Right cardiac atrium (tissue), 5 donors: ENCODE measurements at regions of chr2 and their contacts with region 1.

Region 1: GRCh38 chr2:98731041-98731893 is at the start of gene MGAT4A:
- DNase-seq: peak; percentile 84 to 94 (median 93)
- ATAC-seq: peak; percentile 96
- H3K4me3 ChIP-seq: peak within 1 kb of the TSS; percentile 99
- H3K27ac ChIP-seq: peak within 1 kb of the TSS; percentile 87
- H3K4me1 ChIP-seq: peaks cover 5% of the 10 kb centered on the region
- H3K27me3 ChIP-seq: no peaks in the 10 kb centered on the region
- total RNA-seq, gene MGAT4A: 23.5 to 37.2 (median 26.1) TPM

Region 2: GRCh38 chr2:98654699-98655495 is 76.4 kb before region 1 on chr2:
- intact Hi-C with region 1: loop called in 1 of 4 experiments (anchors 10 kb)
- DNase-seq: no peak
- ATAC-seq: no peak
- H3K4me3 ChIP-seq: no peak overlapping the region
- H3K27ac ChIP-seq: no peak overlapping the region
- H3K4me1 ChIP-seq: no peaks in the 10 kb centered on the region
- H3K27me3 ChIP-seq: no peaks in the 10 kb centered on the region

Region 3: DNA sequence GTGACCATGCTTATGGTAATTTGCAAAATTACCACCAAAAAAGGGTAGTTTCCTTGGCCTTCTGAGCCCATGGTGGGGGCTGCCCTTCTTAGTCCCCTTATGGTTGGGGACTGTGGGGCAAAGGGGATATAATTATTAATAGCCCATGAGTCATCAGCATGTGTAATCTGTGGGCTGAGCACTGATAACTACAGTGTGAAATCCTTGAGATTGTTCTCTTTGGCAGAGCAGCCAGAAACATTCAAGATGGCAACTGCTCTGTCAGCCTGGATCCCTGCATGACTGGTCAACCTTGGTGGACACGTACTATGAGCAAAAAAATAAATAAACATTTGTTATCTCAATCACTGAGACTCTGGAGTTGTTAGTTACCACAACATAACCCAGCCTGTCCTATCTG is 61.6 kb before region 1 on chr2:
- intact Hi-C with region 1: loop called in 1 of 4 experiments (anchors 10 kb)
- DNase-seq: no peak
- ATAC-seq: peak; percentile 81 to 89
- H3K4me3 ChIP-seq: no peak overlapping the region
- H3K27ac ChIP-seq: no peak overlapping the region
- H3K4me1 ChIP-seq: no peaks in the 10 kb centered on the region
- H3K27me3 ChIP-seq: no peaks in the 10 kb centered on the region

Region 4: DNA sequence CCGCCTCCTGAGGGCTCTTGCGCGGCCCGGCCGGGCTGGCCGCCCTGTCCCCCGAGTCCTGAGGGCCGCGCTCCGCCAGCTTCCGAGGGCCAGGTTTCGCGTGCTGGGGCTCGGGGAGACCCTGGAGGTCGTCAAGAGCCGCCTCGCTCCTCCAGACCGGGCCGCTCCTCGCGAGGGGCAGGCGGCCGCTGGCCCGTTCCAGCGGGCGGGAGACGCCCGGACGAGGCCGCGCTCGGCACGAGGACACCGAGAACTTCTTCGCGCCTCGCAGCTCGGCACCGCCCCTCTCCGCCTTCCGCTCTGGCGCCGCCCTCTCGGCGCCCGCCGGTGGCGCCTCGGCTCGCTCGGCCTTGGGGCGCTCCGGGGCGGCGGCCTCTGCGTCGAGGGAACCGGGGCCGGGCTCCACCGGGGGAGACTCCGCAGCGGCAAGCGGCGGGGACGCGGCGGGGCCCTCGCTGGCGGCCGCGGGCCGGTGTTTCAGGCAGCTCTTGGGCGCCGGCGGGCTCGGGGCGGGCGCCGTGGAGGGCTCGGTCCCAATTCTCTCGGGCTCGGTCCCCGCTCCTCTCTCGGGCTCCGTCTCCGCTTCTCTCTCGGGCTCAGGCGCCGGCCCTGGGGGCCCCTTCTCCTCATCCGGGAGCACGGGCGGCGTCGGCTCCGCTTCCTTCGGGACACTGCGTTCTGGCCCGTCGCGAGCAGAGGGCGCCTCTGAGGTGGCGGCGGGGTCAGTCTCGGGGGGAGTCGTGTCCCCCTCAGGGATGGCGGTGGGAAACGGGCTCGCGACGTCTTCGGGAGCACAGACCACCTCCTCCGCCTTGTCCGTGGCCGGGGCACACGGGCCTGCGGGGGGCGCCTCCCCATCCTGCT is 91.3 kb after region 1 on chr2:
- intact Hi-C with region 1: loop called in 2 of 4 experiments (anchors 10 kb)
- DNase-seq: peak; percentile 69 to 88 (median 87)
- ATAC-seq: peak; percentile 82 to 87
- H3K4me3 ChIP-seq: peak overlapping the region; percentile 52
- H3K27ac ChIP-seq: peak overlapping the region; percentile 80
- H3K4me1 ChIP-seq: peaks cover 12% of the 10 kb centered on the region
- H3K27me3 ChIP-seq: no peaks in the 10 kb centered on the region

Region 5: GRCh38 chr2:98846041-98846440 is 114.8 kb after region 1 on chr2:
- intact Hi-C with region 1: no loop called
- DNase-seq: no peak
- ATAC-seq: no peak
- H3K4me3 ChIP-seq: no peak overlapping the region
- H3K27ac ChIP-seq: no peak overlapping the region
- H3K4me1 ChIP-seq: no peaks in the 10 kb centered on the region
- H3K27me3 ChIP-seq: no peaks in the 10 kb centered on the region

Region 6: GRCh38 chr2:98893911-98894321 is 162.6 kb after region 1 on chr2:
- intact Hi-C with region 1: no loop called
- DNase-seq: no peak
- ATAC-seq: no peak
- H3K4me3 ChIP-seq: no peak overlapping the region
- H3K27ac ChIP-seq: no peak overlapping the region
- H3K4me1 ChIP-seq: no peaks in the 10 kb centered on the region
- H3K27me3 ChIP-seq: no peaks in the 10 kb centered on the region

Region 7: GRCh38 chr2:99354070-99354469 is 622.8 kb after region 1 on chr2:
- intact Hi-C with region 1: no loop called
- DNase-seq: no peak
- ATAC-seq: no peak
- H3K4me3 ChIP-seq: no peak overlapping the region
- H3K27ac ChIP-seq: no peak overlapping the region
- H3K4me1 ChIP-seq: no peaks in the 10 kb centered on the region
- H3K27me3 ChIP-seq: no peaks in the 10 kb centered on the region